GM10248 (cell line): ENCODE measurements at regions of chr7 and their contacts with region 1.

Region 1: DNA sequence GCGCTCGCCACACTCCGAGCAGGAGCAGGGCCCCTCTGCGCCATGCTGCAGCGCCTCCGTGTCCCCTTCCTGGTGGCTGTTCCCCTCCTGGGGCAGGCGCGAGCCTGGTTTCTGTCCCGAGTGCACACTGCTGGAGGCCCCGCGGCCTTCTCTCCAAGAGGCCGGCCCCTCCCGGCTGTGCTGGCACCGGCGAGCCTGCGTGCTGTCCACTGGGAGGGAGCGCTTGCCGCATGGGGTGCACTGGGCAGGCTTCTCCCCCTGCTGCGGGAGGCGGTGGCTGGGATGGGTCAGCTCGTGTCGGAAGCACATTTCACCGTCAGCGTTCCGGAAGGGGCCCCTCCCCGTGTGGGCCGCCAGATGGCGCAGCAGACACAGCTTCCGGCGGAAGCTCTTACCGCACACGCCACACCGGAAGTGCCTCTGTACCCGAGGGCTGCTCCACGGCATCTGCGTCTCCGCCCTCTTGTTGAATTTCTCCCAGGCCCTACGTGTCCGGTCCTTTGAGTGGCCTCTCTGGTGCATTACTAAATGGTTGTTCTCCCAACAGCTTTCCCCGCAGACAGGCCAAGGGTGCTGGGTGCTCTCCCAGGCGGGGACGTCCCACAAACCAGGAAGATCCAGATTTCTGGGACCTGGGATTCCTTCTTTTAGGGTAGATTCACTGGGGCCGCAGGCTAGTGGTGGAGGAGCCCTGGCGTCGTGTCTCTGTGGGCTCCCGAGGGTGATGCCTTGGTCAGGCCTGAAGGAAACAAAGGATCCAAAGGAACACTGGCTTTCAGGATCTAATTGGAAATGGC is 18.7 kb downstream of the ZNF786 start:
- DNase-seq: peak; percentile 54
- CTCF ChIP-seq: no peak

Region 2: DNA sequence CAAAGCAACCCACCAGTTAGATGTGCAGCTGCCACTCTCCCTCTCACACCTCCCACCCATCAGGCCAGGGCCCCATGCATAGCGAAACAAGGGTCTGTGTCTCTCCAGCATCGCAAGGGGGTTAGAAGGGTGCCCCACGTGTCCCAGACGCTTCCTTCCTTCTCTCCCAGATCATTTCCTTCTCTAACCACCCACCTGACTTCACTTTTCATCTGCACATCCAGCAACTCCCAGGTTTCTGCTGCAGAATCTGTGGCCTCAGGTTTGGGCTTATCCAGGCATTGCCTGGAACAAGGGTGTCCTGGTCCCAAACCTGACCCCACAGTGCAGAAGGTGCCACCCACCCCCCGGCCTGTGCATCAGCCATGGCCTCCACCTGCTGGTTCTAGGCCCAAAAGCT is 58.0 kb before region 1 on chr7:
- CTCF ChIA-PET with region 1: interaction called, 11 read pairs
- POLR2A ChIA-PET with region 1: no interaction called
- DNase-seq: no peak
- CTCF ChIP-seq: no peak

Region 3: GRCh38 chr7:149050941-149051340 is 20.9 kb before region 1 on chr7:
- CTCF ChIA-PET with region 1: interaction called, 38 read pairs
- POLR2A ChIA-PET with region 1: no interaction called
- DNase-seq: no peak
- CTCF ChIP-seq: no peak

Region 4: GRCh38 chr7:149081914-149082313 is 10.1 kb after region 1 on chr7:
- CTCF ChIA-PET with region 1: interaction called, 10 read pairs
- POLR2A ChIA-PET with region 1: no interaction called
- DNase-seq: no peak
- CTCF ChIP-seq: no peak

Region 5: DNA sequence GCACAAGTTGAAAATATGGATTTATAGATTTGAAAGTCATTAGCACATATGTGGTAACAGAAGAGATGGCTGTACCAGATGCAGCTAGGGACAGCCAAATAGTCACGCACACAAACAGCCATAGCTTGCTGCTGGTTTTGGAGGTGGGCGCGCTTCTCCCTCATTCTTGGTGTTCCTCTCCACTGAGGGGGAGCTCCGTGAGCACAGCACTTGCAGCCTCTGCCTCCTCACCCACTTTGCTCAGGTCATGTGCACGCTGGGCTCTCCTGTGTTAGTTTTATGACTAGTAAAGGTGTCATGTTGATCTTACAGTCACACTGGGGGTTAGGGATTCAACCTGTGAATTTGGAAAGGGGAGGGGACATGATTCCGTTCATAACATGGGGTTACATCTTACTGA is 27.2 kb after region 1 on chr7:
- CTCF ChIA-PET with region 1: no interaction called
- POLR2A ChIA-PET with region 1: no interaction called
- DNase-seq: no peak
- CTCF ChIP-seq: no peak

Region 6: GRCh38 chr7:149180722-149181449 is 109.0 kb after region 1 on chr7:
- CTCF ChIA-PET with region 1: no interaction called
- POLR2A ChIA-PET with region 1: no interaction called
- DNase-seq: no peak
- CTCF ChIP-seq: no peak